ENCODE measurements at regions of chr14 and their contacts with region 1.

Region 1: DNA sequence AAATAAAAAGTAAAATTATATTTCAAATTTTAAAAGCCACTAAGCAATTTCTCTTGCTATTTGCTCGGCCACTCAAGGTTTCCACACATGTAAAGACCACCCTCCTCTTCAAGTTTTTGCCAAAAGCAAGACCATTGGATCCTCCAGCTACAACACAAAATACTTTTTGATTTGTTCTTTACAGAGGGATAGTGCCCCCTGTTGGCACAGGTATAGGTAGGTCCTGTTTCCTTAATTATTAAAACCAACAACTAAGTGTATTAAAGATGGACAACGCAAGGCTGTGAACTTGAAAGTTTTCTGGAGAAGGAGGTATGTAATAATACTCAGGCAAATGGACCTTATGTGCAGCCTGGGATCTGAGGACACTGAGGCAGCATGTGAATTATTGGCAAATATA is 23.8 kb downstream of the ATP6V1D start:
- DNase-seq: peak; percentile 19
- H3K4me3 ChIP-seq: no peak overlapping the region
- H3K27ac ChIP-seq: no peak overlapping the region
- H3K4me1 ChIP-seq: no peaks in the 10 kb centered on the region
- H3K27me3 ChIP-seq: no peaks in the 10 kb centered on the region
- CTCF ChIP-seq: peak; percentile 19 to 38
- POLR2A ChIP-seq: no peak

Region 2: GRCh38 chr14:67166450-67166853 is 169.3 kb before region 1 on chr14:
- CTCF ChIA-PET with region 1: interaction called, 19 read pairs
- POLR2A ChIA-PET with region 1: no interaction called
- dilution Hi-C with region 1: no loop called
- intact Hi-C with region 1: loop called (anchors 1 kb)
- DNase-seq: peak; percentile 60
- H3K4me3 ChIP-seq: no peak overlapping the region
- H3K27ac ChIP-seq: no peak overlapping the region
- H3K4me1 ChIP-seq: no peaks in the 10 kb centered on the region
- H3K27me3 ChIP-seq: no peaks in the 10 kb centered on the region
- CTCF ChIP-seq: peak; percentile 53 to 60
- POLR2A ChIP-seq: no peak

Region 3: GRCh38 chr14:67426983-67427606 is 91.3 kb after region 1 on chr14:
- CTCF ChIA-PET with region 1: no interaction called
- POLR2A ChIA-PET with region 1: no interaction called
- dilution Hi-C with region 1: no loop called
- intact Hi-C with region 1: no loop called
- DNase-seq: peak; percentile 67
- H3K4me3 ChIP-seq: no peak overlapping the region
- H3K27ac ChIP-seq: no peak overlapping the region
- H3K4me1 ChIP-seq: peaks cover 2% of the 10 kb centered on the region
- H3K27me3 ChIP-seq: peaks cover 1 to 2% of the 10 kb centered on the region in 2 experiments
- CTCF ChIP-seq: peak; percentile 73 to 78
- POLR2A ChIP-seq: no peak

Measured in endothelial cell of umbilical vein (primary cell).